Calu3 (cell line): ENCODE measurements at regions of chr5 and their contacts with region 1.

Region 1: DNA sequence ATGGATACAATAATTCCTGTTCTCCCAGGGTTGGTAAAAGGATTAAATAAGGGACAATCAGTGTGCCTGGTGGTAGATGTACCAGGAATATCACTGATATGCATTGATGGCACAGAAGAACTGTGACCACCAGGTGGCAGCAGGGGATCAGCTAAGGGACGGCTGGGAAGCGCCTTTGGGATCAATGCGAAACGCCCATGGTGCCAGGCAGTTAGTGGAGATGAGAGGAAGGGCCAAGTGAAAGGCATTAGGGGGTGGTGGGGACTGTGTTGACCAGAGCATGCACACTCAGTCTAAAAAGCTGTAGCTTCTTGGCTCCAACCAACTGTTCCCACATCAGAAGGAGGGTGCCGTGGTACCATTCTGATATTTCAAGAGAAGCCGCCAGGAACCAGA is 55.6 kb downstream of the ARHGEF37 start:
- DNase-seq: peak; percentile 82
- H3K4me3 Mint-ChIP-seq: no peak overlapping the region
- H3K27ac Mint-ChIP-seq: no peak overlapping the region
- H3K4me1 Mint-ChIP-seq: peaks cover 61% of the 10 kb centered on the region
- H3K27me3 Mint-ChIP-seq: no peaks in the 10 kb centered on the region
- CTCF ChIP-seq: peak; percentile 83

Region 2: DNA sequence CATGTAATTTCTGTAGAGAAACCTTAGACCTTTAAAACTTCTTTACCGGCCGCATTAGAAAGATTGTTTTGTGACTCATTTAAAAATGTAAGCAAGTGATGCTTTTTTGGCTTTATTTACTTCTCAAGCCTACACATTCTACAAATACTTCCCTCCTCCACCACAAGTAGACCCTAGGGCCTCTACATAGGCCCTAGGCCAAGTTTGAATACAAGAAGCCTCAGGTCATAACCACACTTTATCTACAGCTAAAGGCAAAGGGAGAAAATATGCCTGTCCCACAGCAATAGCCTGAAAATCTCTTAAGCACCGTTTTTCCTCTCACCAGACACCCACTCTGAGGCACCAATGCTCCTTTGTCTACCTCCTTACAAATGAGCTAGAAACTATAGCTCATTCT is 139.5 kb before region 1 on chr5:
- CTCF ChIA-PET with region 1: no interaction called
- intact Hi-C with region 1: no loop called
- DNase-seq: no peak
- H3K4me3 Mint-ChIP-seq: no peak overlapping the region
- H3K27ac Mint-ChIP-seq: peak overlapping the region; percentile 48
- H3K4me1 Mint-ChIP-seq: peaks cover 26% of the 10 kb centered on the region
- H3K27me3 Mint-ChIP-seq: no peaks in the 10 kb centered on the region
- CTCF ChIP-seq: no peak

Region 3: DNA sequence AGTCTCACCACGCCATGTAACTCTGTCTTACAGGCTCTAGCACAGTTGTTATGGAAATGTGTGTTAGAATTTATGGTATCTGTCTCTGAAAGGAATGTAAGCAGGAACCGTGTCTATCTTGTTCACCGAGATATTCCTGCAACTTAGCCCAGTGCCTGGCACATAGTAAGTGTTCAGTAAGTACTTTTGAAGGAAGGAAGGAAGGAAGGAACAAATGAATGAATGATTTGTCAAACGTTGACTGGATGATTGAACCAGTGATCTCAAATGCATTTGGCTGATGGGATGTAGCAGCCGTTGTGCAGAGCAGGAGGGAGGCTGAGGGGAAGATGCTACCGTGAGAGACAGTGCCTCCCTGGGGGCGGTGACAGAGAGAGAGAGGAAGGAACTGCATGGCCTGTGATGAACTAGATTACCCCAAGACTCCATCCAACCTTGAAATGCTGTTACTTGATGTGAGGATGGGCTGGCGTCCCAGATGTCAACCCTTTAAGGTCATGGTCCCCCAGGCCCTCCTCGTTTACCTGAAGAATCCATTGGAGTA is 45.8 kb after region 1 on chr5:
- CTCF ChIA-PET with region 1: no interaction called
- intact Hi-C with region 1: no loop called
- DNase-seq: no peak
- H3K4me3 Mint-ChIP-seq: no peak overlapping the region
- H3K27ac Mint-ChIP-seq: no peak overlapping the region
- H3K4me1 Mint-ChIP-seq: no peaks in the 10 kb centered on the region
- H3K27me3 Mint-ChIP-seq: peaks cover 80% of the 10 kb centered on the region
- CTCF ChIP-seq: no peak

Region 4: GRCh38 chr5:149731639-149732323 is 94.9 kb after region 1 on chr5:
- CTCF ChIA-PET with region 1: no interaction called
- intact Hi-C with region 1: loop called (anchors 1 kb)
- DNase-seq: peak; percentile 59
- H3K4me3 Mint-ChIP-seq: peak overlapping the region; percentile 96
- H3K27ac Mint-ChIP-seq: no peak overlapping the region
- H3K4me1 Mint-ChIP-seq: peaks cover 25% of the 10 kb centered on the region
- H3K27me3 Mint-ChIP-seq: peaks cover 13% of the 10 kb centered on the region
- CTCF ChIP-seq: no peak

Region 5: GRCh38 chr5:149828161-149828884 is 191.5 kb after region 1 on chr5:
- CTCF ChIA-PET with region 1: interaction called, 25 read pairs
- intact Hi-C with region 1: loop called (anchors 1 kb)
- DNase-seq: peak; percentile 92
- H3K4me3 Mint-ChIP-seq: no peak overlapping the region
- H3K27ac Mint-ChIP-seq: peak overlapping the region; percentile 47
- H3K4me1 Mint-ChIP-seq: peaks cover 7% of the 10 kb centered on the region
- H3K27me3 Mint-ChIP-seq: no peaks in the 10 kb centered on the region
- CTCF ChIP-seq: peak; percentile 77

Region 6: DNA sequence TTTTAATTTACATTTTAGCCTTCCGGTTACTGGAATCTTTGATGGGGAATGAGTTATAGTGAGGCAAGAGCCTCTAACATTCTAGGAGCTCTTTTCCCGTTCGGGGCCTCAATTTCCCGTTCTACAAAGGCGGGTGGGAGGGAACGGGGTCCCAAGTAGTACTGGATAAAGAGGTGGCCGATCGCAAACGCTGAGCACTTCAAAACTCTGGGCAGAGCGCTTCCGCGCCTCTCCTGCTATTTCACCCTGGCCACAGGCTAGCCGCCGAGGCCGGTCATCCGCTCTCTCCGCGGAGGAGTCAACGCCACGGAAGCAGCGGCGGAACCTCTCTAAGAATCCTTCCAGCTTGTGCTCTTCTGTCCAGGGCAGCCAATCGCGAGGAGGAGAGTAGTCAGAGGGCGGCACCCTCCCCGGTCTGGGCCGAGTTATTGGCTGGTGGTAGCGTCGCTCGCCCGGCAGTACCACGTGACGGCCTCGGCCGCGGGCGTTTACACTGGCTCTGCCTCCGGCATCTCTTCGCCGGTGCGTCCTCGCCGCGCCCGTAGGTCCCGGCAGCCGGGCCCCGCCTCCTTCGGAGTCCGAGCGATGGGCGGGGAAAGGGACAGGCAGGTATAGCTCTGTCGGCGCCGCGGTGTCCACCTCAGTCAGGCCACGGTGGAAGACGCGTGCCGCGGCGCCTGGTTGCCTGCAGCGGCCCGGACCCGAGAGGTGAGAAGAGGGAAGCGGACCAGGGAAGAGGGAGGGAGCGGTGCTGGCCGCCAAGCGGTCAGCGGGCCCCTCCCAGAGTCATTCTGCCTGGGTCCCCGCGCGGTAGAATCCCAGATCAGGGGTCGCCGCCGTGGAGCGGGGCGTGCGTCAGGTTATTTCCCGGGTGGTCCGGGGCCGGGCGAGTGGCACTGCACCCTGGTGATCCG is 323.7 kb after region 1 on chr5 and contains the start of gene SLC26A2:
- CTCF ChIA-PET with region 1: no interaction called
- intact Hi-C with region 1: loop called (anchors 1 kb)
- DNase-seq: peak; percentile 99
- H3K4me3 Mint-ChIP-seq: peak within 1 kb of the TSS; percentile 82
- H3K27ac Mint-ChIP-seq: peak within 1 kb of the TSS; percentile 98
- H3K4me1 Mint-ChIP-seq: peaks cover 57% of the 10 kb centered on the region
- H3K27me3 Mint-ChIP-seq: no peaks in the 10 kb centered on the region
- CTCF ChIP-seq: no peak
- total RNA-seq, gene SLC26A2: 17.3 and 34.6 TPM in 2 replicates

Region 7: DNA sequence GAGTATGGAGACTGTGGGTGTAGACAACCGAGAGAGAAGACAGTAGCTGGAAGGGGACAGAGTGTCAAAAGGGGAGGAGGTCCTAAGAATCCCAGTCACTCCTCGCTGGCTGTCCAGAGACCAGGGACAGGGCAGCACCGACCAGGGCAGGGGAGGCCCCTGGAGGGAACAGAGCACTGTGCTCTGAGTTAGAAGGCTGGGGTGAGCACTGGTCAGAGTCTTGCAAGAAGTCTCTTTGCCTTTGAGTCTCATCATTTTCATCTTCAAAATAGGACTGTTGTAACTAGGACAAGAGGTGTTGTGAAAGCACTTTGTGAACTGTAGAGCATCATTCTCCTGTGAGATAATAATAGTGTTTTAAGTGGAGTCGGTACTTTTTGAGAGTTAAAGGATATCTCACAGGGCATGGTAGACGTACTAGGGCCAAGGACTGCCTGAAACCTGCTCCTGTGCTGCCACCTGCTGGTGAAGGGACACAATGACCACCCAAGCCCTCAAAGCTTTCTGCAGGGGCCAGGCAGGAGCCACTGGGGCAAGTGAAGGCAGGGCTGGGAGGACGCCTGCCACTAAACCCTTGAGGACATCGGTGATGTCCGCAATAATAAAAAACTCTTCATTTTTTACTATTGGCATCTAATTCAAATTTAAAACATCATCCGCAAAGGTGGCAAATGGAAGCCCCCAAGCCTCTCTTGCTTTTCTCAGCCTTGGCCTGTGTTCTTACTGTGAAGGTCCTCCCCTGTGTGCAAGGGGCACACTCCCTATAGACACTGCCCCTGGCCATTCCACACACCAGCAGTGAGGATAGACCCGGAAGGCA is 581.2 kb after region 1 on chr5:
- CTCF ChIA-PET with region 1: no interaction called
- intact Hi-C with region 1: loop called (anchors 5 kb)
- DNase-seq: peak; percentile 91
- H3K4me3 Mint-ChIP-seq: no peak overlapping the region
- H3K27ac Mint-ChIP-seq: no peak overlapping the region
- H3K4me1 Mint-ChIP-seq: peaks cover 7% of the 10 kb centered on the region
- H3K27me3 Mint-ChIP-seq: peaks cover 26% of the 10 kb centered on the region
- CTCF ChIP-seq: peak; percentile 88